Colonic mucosa (tissue), 4 donors: ENCODE measurements at regions of chr16 and their contacts with region 1.

Region 1: DNA sequence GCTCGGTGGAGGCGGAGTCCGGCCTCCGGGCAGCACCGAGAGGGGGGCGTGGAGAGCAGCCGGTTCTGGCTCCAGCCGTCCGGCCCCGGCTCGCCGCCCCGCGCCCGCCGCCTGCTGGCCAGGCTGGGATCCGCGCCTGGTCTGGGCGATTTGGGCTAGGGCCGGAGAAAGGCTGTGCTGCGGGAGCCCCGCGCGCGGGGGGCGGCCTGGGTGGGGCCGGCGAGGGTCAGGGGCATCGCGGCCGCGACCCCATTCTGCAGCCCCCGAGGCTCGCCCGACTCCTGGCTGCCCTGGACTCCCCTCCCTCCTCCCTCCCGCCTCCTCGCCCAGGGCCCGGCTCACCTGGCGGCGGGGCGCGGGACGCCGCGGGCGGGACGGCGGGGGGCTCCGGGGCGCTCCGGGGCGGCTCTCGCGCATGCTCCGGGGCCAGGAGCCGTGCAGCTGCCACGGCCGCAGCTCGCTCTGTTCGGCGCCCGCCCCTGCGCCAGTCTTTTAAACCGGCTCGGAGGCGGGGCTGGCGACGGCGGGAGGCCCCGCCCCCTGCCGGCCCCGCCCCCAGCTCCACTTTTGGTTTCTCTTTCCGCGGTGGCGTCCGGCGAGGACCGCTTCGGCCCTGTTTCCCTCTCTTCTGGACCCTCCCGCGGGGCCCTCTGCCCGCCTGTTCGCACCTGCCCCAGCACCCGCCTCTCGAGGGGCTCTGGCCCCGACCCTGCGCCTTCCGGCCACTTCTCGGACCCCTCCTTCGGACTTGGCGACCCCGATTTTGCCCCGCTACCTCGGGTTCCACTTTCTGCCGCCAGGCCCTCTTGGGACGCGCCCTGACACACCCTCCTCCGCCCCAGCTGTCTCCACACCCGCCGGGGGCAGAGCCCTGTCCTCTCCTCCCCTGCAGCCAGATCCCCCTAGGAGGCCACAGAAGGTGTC is at the start of gene SOCS1:
- DNase-seq: peak; percentile 89
- H3K4me3 ChIP-seq: peak within 1 kb of the TSS; percentile 93
- H3K27ac ChIP-seq: peak within 1 kb of the TSS; percentile 96
- H3K4me1 ChIP-seq: peaks cover 8% of the 10 kb centered on the region
- H3K27me3 ChIP-seq: no peaks in the 10 kb centered on the region
- CTCF ChIP-seq: peak; percentile 78
- total RNA-seq, gene SOCS1: 3.2 to 3.7 TPM

Region 2: GRCh38 chr16:10828851-10829731 is 426.9 kb before region 1 on chr16:
- intact Hi-C with region 1: no loop called
- DNase-seq: peak; percentile 78
- H3K4me3 ChIP-seq: peak overlapping the region; percentile 15
- H3K27ac ChIP-seq: peak overlapping the region; percentile 80
- H3K4me1 ChIP-seq: peaks cover 9% of the 10 kb centered on the region
- H3K27me3 ChIP-seq: no peaks in the 10 kb centered on the region
- CTCF ChIP-seq: no peak

Region 3: DNA sequence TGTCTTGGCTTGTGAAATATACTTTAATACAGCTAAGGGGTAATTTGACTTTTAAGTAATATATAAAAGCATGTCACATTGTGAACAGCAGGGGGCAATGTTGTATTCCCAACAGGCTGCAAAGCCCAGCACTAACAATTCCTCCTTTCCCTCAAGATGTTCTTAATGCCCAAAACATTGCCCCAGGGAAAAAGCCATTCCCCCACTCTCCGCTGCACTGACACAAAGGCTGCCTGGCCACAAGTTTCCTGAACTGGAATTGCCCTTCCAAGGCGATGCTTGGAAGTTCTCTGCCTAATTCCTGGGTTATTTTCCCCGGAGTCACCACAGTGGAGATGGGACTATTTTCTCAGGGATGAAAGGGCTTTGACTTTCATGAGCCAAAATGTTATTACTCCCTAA is 284.4 kb before region 1 on chr16:
- intact Hi-C with region 1: loop called (anchors 2 kb)
- DNase-seq: peak; percentile 46
- H3K4me3 ChIP-seq: no peak overlapping the region
- H3K27ac ChIP-seq: no peak overlapping the region
- H3K4me1 ChIP-seq: no peaks in the 10 kb centered on the region
- H3K27me3 ChIP-seq: no peaks in the 10 kb centered on the region
- CTCF ChIP-seq: peak; percentile 71

Region 4: GRCh38 chr16:11105038-11105903 is 150.7 kb before region 1 on chr16:
- intact Hi-C with region 1: loop called (anchors 10 kb)
- DNase-seq: peak; percentile 39
- H3K4me3 ChIP-seq: no peak overlapping the region
- H3K27ac ChIP-seq: peak overlapping the region; percentile 35
- H3K4me1 ChIP-seq: peaks cover 18% of the 10 kb centered on the region
- H3K27me3 ChIP-seq: no peaks in the 10 kb centered on the region
- CTCF ChIP-seq: no peak

Region 5: GRCh38 chr16:11218604-11218962 is 37.4 kb before region 1 on chr16:
- intact Hi-C with region 1: no loop called
- DNase-seq: no peak
- H3K4me3 ChIP-seq: no peak overlapping the region
- H3K27ac ChIP-seq: no peak overlapping the region
- H3K4me1 ChIP-seq: no peaks in the 10 kb centered on the region
- H3K27me3 ChIP-seq: no peaks in the 10 kb centered on the region
- CTCF ChIP-seq: no peak

Region 6: GRCh38 chr16:11345040-11345862 is 89.3 kb after region 1 on chr16 and contains the start of gene RMI2:
- intact Hi-C with region 1: loop called (anchors 5 kb)
- DNase-seq: peak; percentile 98
- H3K4me3 ChIP-seq: peak within 1 kb of the TSS; percentile 39
- H3K27ac ChIP-seq: no peak within 1 kb of the TSS
- H3K4me1 ChIP-seq: no peaks in the 10 kb centered on the region
- H3K27me3 ChIP-seq: no peaks in the 10 kb centered on the region
- CTCF ChIP-seq: no peak
- total RNA-seq, gene RMI2: 12.0 to 46.3 TPM